Left cardiac atrium (tissue), 4 donors: ENCODE measurements at regions of chr22 and their contacts with region 1.

Region 1: DNA sequence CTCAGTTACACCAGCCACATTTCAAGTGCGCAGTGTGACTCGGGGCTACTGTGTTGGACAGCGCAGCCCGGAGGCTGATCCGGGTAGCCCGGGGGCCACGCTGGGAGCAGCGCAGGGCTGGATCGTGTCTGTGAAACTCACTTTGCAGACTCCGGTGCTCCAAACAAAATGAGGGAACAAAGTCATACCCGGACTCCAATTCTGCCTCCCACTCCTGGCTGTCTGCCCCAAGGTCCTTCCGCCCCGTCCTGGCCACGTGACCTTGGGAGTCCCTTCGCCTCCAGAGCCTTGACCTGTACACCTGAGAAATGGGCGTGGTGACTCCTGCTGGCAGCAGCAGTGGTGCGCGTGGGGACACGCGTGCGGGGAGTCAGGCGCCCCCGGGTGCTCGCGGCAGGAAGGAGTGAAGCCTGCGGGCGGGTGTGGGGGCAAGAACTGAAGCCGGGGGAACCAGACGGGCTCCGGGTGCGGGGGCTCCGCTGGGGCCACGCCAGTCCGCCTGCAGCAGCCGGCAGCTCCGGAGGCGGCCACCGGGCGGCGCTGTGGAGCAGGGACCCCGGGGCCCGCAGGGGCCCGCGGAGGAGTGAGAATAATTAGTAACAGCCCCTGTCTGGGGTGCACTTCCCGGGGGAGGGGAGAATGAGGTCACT is 42.4 kb downstream of the KCNJ4 start:
- DNase-seq: no peak
- ATAC-seq: peak; percentile 40 to 63

Region 2: DNA sequence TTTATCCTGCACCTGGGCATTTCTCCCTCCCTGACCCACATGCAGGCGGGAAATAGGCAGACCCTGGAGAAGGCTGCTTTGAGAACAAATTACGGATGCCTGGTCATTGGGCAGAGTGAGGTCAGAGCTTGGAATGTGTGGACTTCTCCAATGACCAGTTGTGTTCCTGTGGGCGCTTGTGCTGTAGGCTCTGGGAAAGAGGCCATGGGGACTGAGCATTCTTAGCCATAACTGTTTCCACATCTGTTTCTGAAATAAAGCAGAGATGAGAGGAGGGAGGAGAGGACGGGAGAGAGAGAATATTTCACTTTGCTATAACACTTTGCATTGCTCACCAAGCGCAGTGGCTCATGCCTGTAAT is 128.5 kb before region 1 on chr22:
- intact Hi-C with region 1: no loop called
- DNase-seq: no peak
- ATAC-seq: peak; percentile 55 to 88

Region 3: DNA sequence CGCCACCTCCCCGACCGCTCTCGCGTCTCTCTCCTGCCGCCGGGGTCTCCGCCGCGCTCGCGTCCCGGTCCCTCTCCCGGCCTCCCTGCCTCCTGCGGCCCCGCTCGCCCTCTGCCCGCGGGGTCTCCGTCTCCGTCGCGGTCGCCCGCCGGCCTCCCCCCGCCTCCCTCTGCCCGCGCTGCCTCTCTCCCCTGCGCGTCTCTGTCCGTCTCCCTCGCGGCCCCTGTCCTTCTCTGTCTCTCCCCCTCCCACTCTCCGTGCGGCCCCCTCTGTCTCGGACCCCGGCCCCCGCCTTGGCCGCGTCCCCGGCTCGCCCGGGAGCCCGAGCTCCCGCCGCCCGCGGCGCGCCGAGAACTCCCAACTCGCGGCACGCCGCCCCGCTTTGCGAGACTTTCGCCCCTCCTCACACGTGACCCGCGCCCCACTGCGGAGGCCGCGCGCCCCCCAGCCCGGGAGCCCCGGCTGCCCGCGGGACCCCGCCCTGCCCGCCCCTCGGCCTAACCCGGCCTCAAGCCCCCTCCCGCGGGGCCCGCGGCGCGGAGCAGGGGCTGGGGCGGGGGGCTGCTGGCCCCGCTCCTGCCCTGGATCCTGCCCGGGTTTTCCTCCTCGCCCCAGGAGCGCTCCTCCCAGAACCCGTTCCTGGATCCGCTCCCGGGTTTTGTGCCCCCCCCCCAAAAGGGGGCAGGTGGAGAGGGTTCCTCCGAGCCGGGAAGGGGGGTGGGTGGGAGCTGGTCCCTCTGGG is 43.1 kb after region 1 on chr22:
- intact Hi-C with region 1: loop called in 1 of 2 experiments (anchors 5 kb)
- DNase-seq: peak; percentile 50
- ATAC-seq: peak; percentile 1 to 8